PC-9 (cell line): ENCODE measurements at regions of chr1 and their contacts with region 1.

Region 1: GRCh38 chr1:51569284-51570062 is 47.4 kb upstream of the OSBPL9 start:
- DNase-seq: peak; percentile 87 to 98
- H3K4me3 ChIP-seq: peak overlapping the region; percentile 22; the same call in 1 of the 2 replicates
- H3K27ac ChIP-seq: peak overlapping the region; percentile 97
- H3K4me1 ChIP-seq: peaks cover 80% of the 10 kb centered on the region
- H3K27me3 ChIP-seq: no peaks in the 10 kb centered on the region
- CTCF ChIP-seq: peak; percentile 52

Region 2: GRCh38 chr1:51519048-51519864 is 50.2 kb before region 1 on chr1 and contains the start of gene EPS15:
- CTCF ChIA-PET with region 1: no interaction called
- POLR2A ChIA-PET with region 1: no interaction called
- intact Hi-C with region 1: loop called (anchors 2 kb)
- DNase-seq: peak; percentile 65 to 89
- H3K4me3 ChIP-seq: peak within 1 kb of the TSS; percentile 100
- H3K27ac ChIP-seq: peak within 1 kb of the TSS; percentile 72
- H3K4me1 ChIP-seq: peaks cover 36% of the 10 kb centered on the region
- H3K27me3 ChIP-seq: no peaks in the 10 kb centered on the region
- CTCF ChIP-seq: no peak
- total RNA-seq, gene EPS15: 60.1 and 61.0 TPM in 2 replicates

Region 3: DNA sequence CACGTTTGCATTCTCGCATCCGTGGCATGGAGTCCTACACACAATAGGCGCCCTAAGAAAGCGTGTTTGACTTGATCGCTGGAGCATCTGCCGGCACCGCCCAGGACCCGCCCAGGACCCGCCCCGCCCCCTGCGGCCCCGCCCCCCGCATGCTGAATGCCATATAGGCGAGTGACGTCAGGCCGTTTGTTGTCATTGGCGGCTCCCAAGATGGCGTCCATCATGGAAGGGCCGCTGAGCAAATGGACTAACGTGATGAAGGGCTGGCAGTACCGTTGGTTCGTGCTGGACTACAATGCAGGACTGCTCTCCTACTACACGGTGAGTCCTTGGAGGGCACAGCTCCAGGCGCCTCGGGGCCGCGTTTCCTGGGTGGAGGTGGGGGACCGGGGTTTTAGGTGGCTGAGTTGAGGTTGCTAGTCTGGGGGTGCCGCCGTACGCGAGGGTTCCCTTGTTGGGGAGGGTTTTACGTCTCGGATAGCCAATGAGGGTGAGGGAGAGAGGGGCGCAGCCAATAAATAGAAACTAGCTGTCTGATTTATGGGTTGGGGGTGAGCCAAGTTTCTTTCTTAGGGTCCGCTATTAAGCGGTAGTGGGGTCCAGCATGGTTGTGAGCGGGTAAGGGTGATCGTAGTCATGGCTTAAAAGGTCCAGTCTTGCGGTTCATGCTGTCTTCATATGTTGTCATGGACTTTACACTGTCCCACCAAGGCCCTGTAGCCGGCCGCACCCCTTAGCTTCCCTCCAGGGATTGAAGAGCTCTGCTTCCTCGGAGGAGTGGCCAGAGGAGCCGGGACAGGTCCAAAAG is 47.6 kb after region 1 on chr1 and contains the start of gene OSBPL9:
- CTCF ChIA-PET with region 1: interaction called, 13 read pairs
- POLR2A ChIA-PET with region 1: interaction called, 4 read pairs
- intact Hi-C with region 1: loop called (anchors 1 kb)
- DNase-seq: peak; percentile 76 to 83
- H3K4me3 ChIP-seq: peak within 1 kb of the TSS; percentile 80
- H3K27ac ChIP-seq: peak within 1 kb of the TSS; percentile 53
- H3K4me1 ChIP-seq: peaks cover 58% of the 10 kb centered on the region
- H3K27me3 ChIP-seq: no peaks in the 10 kb centered on the region
- CTCF ChIP-seq: no peak
- total RNA-seq, gene OSBPL9: 149 and 188 TPM in 2 replicates

Region 4: DNA sequence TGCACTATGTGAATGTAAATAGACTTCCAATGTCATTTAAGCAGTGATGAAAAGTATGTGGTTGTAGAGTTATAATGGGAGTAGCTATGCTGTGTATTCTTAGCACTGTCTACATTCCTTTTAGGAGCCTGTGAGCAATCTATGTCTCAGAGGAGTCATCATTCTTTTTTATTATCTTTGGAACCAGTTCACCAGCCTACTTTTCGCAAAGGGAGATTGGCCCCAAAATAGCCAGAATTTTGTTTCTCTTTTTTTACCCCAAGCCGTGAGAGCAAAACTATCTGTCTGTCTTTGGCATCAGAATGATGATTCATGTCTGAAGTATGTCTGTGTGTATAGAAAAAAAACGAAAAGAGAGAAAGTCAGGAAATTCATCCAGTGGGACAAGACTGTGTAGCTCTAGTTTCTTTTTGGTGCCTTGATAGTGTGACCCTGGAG is 91.6 kb after region 1 on chr1:
- CTCF ChIA-PET with region 1: no interaction called
- POLR2A ChIA-PET with region 1: no interaction called
- intact Hi-C with region 1: loop called (anchors 1 kb)
- DNase-seq: peak; percentile 27 to 67
- H3K4me3 ChIP-seq: peak overlapping the region; percentile 19; the same call in 1 of the 2 replicates
- H3K27ac ChIP-seq: peak overlapping the region; percentile 57
- H3K4me1 ChIP-seq: peaks cover 32% of the 10 kb centered on the region
- H3K27me3 ChIP-seq: no peaks in the 10 kb centered on the region
- CTCF ChIP-seq: no peak

Region 5: DNA sequence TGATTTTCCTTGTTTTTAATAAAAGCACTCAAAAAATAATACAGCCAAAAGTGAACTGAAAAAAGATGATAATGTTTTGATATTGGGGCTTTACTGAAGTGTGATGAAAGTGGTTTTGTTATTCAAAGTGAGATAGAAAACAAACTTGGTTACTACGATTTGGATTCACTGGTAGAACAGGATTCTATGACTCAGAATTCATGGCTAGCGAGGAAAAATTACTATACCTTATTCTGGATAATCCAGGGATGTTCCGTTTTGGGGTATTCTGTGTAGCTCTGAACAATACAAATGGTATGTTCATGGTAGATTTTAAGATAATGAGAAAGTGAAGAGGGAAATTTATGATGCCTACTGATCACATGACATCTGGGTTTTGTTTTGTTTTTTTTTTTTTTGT is 191.4 kb after region 1 on chr1:
- CTCF ChIA-PET with region 1: no interaction called
- POLR2A ChIA-PET with region 1: interaction called, 5 read pairs
- intact Hi-C with region 1: loop called (anchors 2 kb)
- DNase-seq: peak in 1 of 2 experiments; percentile 76
- H3K4me3 ChIP-seq: no peak overlapping the region
- H3K27ac ChIP-seq: peak overlapping the region; percentile 60
- H3K4me1 ChIP-seq: peaks cover 30% of the 10 kb centered on the region
- H3K27me3 ChIP-seq: no peaks in the 10 kb centered on the region
- CTCF ChIP-seq: no peak

Region 6: DNA sequence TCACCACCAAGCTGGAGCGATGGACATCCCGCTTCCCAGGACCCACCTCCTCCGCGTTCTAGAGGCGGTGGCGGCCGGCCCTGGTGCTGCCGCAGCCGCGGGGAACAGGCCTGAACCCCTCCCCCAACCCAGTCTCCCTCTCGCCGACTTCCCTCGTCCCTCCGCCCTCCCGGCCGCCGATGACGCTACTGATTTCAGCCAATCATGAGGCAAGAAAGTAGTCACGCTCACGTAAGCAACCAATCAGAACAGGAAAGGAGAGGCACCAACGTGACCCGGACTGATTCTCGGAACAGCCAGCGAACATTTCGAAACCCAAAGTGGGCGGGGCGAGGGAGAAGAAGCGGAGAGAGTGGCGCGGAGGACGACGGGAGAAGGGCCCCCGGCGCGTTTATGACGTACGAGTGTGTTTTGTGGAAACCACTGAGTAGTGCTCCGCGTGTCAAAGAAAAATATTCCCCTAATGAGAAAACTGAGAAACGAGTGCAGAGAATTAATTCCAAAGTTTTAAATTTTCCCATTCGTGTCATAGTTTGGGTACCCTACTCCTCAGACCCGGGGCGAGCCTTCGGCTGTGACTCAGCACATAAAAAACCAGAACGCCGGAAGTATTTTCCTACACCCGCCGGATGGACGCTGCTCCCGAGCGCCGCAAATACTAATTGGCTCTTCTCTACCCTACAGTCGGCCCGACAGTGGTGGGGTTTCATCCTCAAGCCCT is 309.3 kb after region 1 on chr1 and contains the start of gene NRDC:
- CTCF ChIA-PET with region 1: no interaction called
- POLR2A ChIA-PET with region 1: no interaction called
- intact Hi-C with region 1: loop called (anchors 5 kb)
- DNase-seq: peak; percentile 99
- H3K4me3 ChIP-seq: peak within 1 kb of the TSS; percentile 98
- H3K27ac ChIP-seq: peak within 1 kb of the TSS; percentile 91
- H3K4me1 ChIP-seq: peaks cover 31% of the 10 kb centered on the region
- H3K27me3 ChIP-seq: no peaks in the 10 kb centered on the region
- CTCF ChIP-seq: no peak
- total RNA-seq, gene NRDC: 217 and 219 TPM in 2 replicates